B cell (primary cell): ENCODE measurements at regions of chr18 and their contacts with region 1.

Region 1: DNA sequence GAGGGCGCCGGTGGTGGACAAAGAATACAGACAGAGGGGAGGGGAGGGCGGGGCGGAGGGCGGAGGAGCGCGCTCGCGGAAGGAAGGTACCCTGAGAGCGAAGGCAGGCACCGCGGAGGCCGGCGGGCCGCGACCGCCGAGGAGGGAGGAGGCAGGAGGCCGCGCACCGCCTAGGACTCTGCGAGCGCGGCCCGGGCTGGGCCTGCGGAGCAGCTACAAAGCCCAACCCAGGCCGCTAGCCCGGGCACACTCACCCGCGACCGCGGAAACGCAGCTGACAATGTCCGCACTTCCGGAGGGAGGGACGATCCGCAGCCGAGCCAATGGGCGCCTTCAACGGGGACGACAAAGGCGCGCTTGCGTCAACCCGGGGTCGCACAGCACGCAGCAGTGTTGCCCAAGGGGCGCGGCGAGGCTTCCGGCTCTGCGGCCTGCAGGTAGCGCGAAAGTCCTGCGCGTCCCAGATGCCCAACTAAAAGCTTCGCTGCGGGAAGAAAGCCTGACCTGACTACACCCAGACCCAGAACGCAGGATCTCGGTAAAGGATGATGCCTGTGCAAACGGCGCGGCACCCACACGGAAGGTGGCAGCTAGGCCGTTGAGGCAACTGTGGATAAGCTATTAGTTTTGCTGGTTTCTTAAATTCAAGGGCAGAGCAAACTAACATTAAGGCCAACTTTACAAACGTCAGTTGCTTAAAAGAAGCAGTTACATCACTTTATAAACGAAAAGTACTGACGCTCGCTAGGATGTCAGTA is at the start of gene C18orf32:
- DNase-seq: peak; percentile 96
- ATAC-seq: peak; percentile 93
- H3K4me3 ChIP-seq: peak within 1 kb of the TSS; percentile 74 to 97 (median 82)
- H3K4me3 Mint-ChIP-seq: peak within 1 kb of the TSS; percentile 98
- H3K27ac ChIP-seq: peak within 1 kb of the TSS; percentile 88 to 95
- H3K27ac Mint-ChIP-seq: peak within 1 kb of the TSS; percentile 97
- H3K4me1 ChIP-seq: peaks cover 39% of the 10 kb centered on the region in 2 donors
- H3K4me1 Mint-ChIP-seq: peaks cover 66% of the 10 kb centered on the region
- H3K27me3 ChIP-seq: no peaks in the 10 kb centered on the region
- H3K27me3 Mint-ChIP-seq: no peaks in the 10 kb centered on the region
- CTCF ChIP-seq: no peak
- total RNA-seq, gene C18orf32: 27.7 and 36.3 TPM in 2 replicates

Region 2: GRCh38 chr18:49459404-49460171 is 27.5 kb before region 1 on chr18:
- CTCF ChIA-PET with region 1: interaction called, 12 read pairs
- POLR2A ChIA-PET with region 1: interaction called, 19 read pairs
- intact Hi-C with region 1: loop called (anchors 1 kb)
- DNase-seq: peak; percentile 19
- ATAC-seq: no peak
- H3K4me3 ChIP-seq: peak overlapping the region; percentile 55 to 98 (median 94)
- H3K4me3 Mint-ChIP-seq: peak overlapping the region; percentile 96
- H3K27ac ChIP-seq: peak overlapping the region in 1 of 2 donors; percentile 79
- H3K27ac Mint-ChIP-seq: peak overlapping the region; percentile 90
- H3K4me1 ChIP-seq: peaks cover 15 to 19% of the 10 kb centered on the region in 2 donors
- H3K4me1 Mint-ChIP-seq: peaks cover 45% of the 10 kb centered on the region
- H3K27me3 ChIP-seq: no peaks in the 10 kb centered on the region
- H3K27me3 Mint-ChIP-seq: no peaks in the 10 kb centered on the region
- CTCF ChIP-seq: no peak

Region 3: GRCh38 chr18:49548229-49548636 is 61.1 kb after region 1 on chr18:
- CTCF ChIA-PET with region 1: no interaction called
- POLR2A ChIA-PET with region 1: no interaction called
- intact Hi-C with region 1: no loop called
- DNase-seq: no peak
- ATAC-seq: no peak
- H3K4me3 ChIP-seq: no peak overlapping the region
- H3K4me3 Mint-ChIP-seq: no peak overlapping the region
- H3K27ac ChIP-seq: no peak overlapping the region
- H3K27ac Mint-ChIP-seq: no peak overlapping the region
- H3K4me1 ChIP-seq: no peaks in the 10 kb centered on the region
- H3K4me1 Mint-ChIP-seq: no peaks in the 10 kb centered on the region
- H3K27me3 ChIP-seq: peaks cover 0 to 15% (median 3%) of the 10 kb centered on the region in 4 experiments
- H3K27me3 Mint-ChIP-seq: peaks cover 37% of the 10 kb centered on the region
- CTCF ChIP-seq: no peak

Region 4: DNA sequence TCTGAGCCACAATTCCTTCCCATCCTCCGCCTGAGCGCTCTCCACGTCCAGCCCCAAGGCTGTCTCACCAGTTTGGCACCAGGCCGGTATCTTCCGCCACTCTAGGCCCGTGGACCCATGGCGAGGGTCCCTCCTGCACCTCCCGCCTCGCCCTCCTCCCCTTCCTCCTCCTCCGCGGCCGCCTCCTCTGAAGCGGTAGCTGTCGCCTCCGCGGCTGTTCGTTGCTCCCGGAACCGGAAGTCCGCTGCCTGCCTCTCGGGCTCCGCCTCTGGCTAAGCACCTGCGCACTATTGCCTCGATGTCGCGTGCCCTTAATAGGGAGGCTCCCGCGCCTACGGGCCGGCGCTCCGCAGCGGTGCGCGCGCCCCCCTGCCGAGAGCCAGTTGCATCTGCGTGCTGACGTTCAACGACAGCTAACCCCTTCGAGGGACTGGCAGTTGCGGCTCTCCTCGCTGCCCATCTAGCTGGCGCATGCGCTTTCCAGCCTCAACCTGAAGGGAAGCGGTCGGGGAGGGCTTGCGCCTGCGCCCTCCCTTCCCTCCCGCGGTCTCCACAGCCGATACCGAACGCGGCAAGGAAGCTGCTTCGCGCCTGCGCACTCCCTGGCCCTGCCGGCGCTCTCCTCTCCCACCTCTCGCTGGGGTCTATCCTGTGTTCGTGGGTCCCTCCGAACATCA is 794.3 kb after region 1 on chr18 and contains the start of gene MBD1:
- CTCF ChIA-PET with region 1: no interaction called
- POLR2A ChIA-PET with region 1: interaction called, 8 read pairs
- intact Hi-C with region 1: loop called (anchors 1 kb)
- DNase-seq: peak; percentile 100
- ATAC-seq: peak; percentile 92
- H3K4me3 ChIP-seq: peak within 1 kb of the TSS; percentile 92 to 99 (median 99)
- H3K4me3 Mint-ChIP-seq: peak within 1 kb of the TSS; percentile 97
- H3K27ac ChIP-seq: peak within 1 kb of the TSS; percentile 81 to 87
- H3K27ac Mint-ChIP-seq: peak within 1 kb of the TSS; percentile 97
- H3K4me1 ChIP-seq: peaks cover 30 to 34% of the 10 kb centered on the region in 2 donors
- H3K4me1 Mint-ChIP-seq: peaks cover 39% of the 10 kb centered on the region
- H3K27me3 ChIP-seq: no peaks in the 10 kb centered on the region
- H3K27me3 Mint-ChIP-seq: no peaks in the 10 kb centered on the region
- CTCF ChIP-seq: no peak
- total RNA-seq, gene MBD1: 120 and 132 TPM in 2 replicates

Region 5: DNA sequence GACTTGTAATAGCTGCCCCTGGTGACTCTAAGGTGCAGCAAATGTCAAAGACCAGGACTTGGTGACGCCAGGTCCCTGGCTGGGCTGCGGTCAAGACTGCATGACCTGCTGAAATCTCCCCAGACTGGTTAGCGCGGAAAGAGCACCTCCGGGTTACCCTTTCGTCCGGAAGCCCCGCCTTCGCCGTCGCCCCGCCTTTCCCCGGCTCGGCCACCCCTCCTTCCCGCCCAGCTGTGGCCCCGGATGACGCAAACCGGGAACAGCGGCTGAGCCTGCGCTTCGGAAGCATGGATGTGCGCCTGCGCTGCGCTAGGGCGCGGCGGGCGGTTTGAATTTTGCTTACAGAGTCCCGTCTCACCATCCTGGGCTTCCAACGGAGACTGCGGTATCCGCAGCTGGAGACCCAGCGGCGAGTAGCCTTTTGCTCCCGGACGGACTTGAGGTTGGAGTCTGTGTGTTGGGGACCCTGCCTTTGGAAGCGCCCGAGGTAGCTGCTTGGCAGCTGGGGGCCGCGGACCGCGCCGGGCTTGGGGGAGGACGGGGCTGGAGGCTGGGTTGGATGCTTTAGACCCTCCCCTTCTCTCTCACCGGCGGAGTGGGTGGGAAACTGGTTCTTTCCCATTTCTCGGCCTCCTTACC is 887.7 kb after region 1 on chr18 and contains the start of gene SKA1:
- CTCF ChIA-PET with region 1: no interaction called
- POLR2A ChIA-PET with region 1: no interaction called
- intact Hi-C with region 1: loop called (anchors 5 kb)
- DNase-seq: peak; percentile 96
- ATAC-seq: peak; percentile 100
- H3K4me3 ChIP-seq: peak within 1 kb of the TSS; percentile 60 to 78 (median 72)
- H3K4me3 Mint-ChIP-seq: peak within 1 kb of the TSS; percentile 85
- H3K27ac ChIP-seq: peak within 1 kb of the TSS; percentile 66 to 83
- H3K27ac Mint-ChIP-seq: peak within 1 kb of the TSS; percentile 89
- H3K4me1 ChIP-seq: peaks cover 5 to 16% of the 10 kb centered on the region in 2 donors
- H3K4me1 Mint-ChIP-seq: peaks cover 15% of the 10 kb centered on the region
- H3K27me3 ChIP-seq: peaks cover 0 to 7% (median 3%) of the 10 kb centered on the region in 4 experiments
- H3K27me3 Mint-ChIP-seq: peaks cover 13% of the 10 kb centered on the region
- CTCF ChIP-seq: no peak
- total RNA-seq, gene SKA1: 0.52 and 0.66 TPM in 2 replicates